ENCODE measurements at regions of chr2 and their contacts with region 1.

Region 1: GRCh38 chr2:71130113-71130904 is at the starts of genes MCEE and MPHOSPH10:
- DNase-seq: peak; percentile 81 to 92 (median 90)
- ATAC-seq: peak; percentile 90
- H3K4me3 ChIP-seq: peak within 1 kb of the TSS; percentile 75 to 96
- H3K4me3 Mint-ChIP-seq: no peak within 1 kb of the TSS
- H3K27ac ChIP-seq: peak within 1 kb of the TSS; percentile 87 to 89
- H3K27ac Mint-ChIP-seq: no peak within 1 kb of the TSS
- H3K4me1 ChIP-seq: peaks cover 27% of the 10 kb centered on the region
- H3K4me1 Mint-ChIP-seq: peaks cover 19% of the 10 kb centered on the region
- H3K27me3 ChIP-seq: no peaks in the 10 kb centered on the region
- H3K27me3 Mint-ChIP-seq: no peaks in the 10 kb centered on the region
- CTCF ChIP-seq: no peak
- total RNA-seq, gene MCEE: 7.1 to 7.3 TPM
- total RNA-seq, gene MPHOSPH10: 51.4 to 57.9 TPM

Region 2: DNA sequence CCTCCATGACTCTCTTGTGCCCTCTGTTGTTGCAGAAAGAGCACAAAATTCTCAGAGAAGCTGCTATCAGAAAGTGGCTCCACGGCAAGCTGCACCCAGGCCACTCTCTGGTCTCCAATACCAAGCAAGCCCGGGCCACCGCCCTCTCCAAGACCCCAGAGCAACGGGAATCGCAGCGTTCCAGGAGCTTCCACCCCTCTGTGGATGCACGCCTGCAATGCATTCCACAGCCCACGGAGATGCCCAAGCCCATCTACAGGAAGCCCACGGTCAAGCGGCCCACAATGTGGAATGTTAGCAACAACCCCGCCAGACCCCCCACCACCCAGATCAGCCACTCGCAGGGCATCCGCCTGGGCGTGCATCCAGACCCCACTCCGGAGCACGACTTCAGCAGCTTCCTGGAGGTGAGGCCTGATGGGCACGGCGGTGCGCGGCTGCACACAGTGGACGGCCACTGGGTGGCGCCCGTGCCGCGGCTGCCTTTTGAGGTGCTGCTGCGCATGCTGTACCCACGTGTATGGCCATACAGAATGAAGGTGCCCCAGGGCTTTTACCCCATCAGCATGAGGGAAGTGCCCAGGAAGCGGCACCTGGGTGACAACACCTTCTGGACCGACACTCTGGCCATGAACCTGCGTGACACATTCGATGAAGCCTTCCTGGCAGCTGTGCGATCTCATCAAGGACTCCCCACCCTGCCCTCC is 145.6 kb before region 1 on chr2:
- CTCF ChIA-PET with region 1: no interaction called
- POLR2A ChIA-PET with region 1: no interaction called
- intact Hi-C with region 1: loop called (anchors 5 kb)
- DNase-seq: peak; percentile 67 to 88 (median 83)
- ATAC-seq: peak; percentile 100
- H3K4me3 ChIP-seq: no peak overlapping the region
- H3K4me3 Mint-ChIP-seq: peak overlapping the region; percentile 51
- H3K27ac ChIP-seq: no peak overlapping the region
- H3K27ac Mint-ChIP-seq: peak overlapping the region; percentile 6
- H3K4me1 ChIP-seq: peaks cover 11% of the 10 kb centered on the region
- H3K4me1 Mint-ChIP-seq: peaks cover 16% of the 10 kb centered on the region
- H3K27me3 ChIP-seq: no peaks in the 10 kb centered on the region
- H3K27me3 Mint-ChIP-seq: no peaks in the 10 kb centered on the region
- CTCF ChIP-seq: peak; percentile 84

Region 3: DNA sequence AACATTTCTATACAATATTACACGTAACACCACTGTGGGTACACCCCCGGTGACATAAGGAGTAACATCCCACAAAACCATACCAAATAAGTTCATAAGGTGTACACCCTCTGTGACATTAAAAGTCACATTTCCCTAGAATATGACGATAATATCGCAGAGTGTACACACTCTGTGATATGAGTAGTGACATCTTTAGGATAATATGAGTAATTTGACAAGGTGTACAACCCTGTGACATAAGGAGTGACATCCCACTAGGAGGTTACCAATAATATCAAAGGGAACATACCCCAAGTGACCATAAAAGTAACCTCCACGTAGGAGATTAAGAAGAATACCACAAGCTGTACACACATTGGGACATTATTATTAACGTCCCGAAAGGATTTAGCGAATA is 111.7 kb before region 1 on chr2:
- CTCF ChIA-PET with region 1: no interaction called
- POLR2A ChIA-PET with region 1: no interaction called
- intact Hi-C with region 1: loop called in 1 of 2 experiments (anchors 1 kb)
- DNase-seq: no peak
- ATAC-seq: no peak
- H3K4me3 ChIP-seq: no peak overlapping the region
- H3K4me3 Mint-ChIP-seq: no peak overlapping the region
- H3K27ac ChIP-seq: no peak overlapping the region
- H3K27ac Mint-ChIP-seq: no peak overlapping the region
- H3K4me1 ChIP-seq: no peaks in the 10 kb centered on the region
- H3K4me1 Mint-ChIP-seq: peaks cover 3% of the 10 kb centered on the region
- H3K27me3 ChIP-seq: no peaks in the 10 kb centered on the region
- H3K27me3 Mint-ChIP-seq: no peaks in the 10 kb centered on the region
- CTCF ChIP-seq: no peak

Region 4: GRCh38 chr2:71226965-71227560 is 96.8 kb after region 1 on chr2 and contains the start of gene PAIP2B:
- CTCF ChIA-PET with region 1: interaction called, 3 read pairs
- POLR2A ChIA-PET with region 1: interaction called, 10 read pairs
- intact Hi-C with region 1: loop called (anchors 1 kb)
- DNase-seq: peak; percentile 95 to 99 (median 96)
- ATAC-seq: peak; percentile 89
- H3K4me3 ChIP-seq: peak within 1 kb of the TSS; percentile 77 to 81
- H3K4me3 Mint-ChIP-seq: peak within 1 kb of the TSS; percentile 97
- H3K27ac ChIP-seq: peak within 1 kb of the TSS; percentile 79 to 81
- H3K27ac Mint-ChIP-seq: peak within 1 kb of the TSS; percentile 98
- H3K4me1 ChIP-seq: peaks cover 15% of the 10 kb centered on the region
- H3K4me1 Mint-ChIP-seq: peaks cover 31% of the 10 kb centered on the region
- H3K27me3 ChIP-seq: peaks cover 0 to 2% of the 10 kb centered on the region in 2 experiments
- H3K27me3 Mint-ChIP-seq: peaks cover 12% of the 10 kb centered on the region
- CTCF ChIP-seq: no peak
- total RNA-seq, gene PAIP2B: 1.7 to 1.8 TPM

Region 5: GRCh38 chr2:71331581-71332434 is 201.5 kb after region 1 on chr2 and contains the start of gene ZNF638:
- CTCF ChIA-PET with region 1: interaction called, 5 read pairs
- POLR2A ChIA-PET with region 1: interaction called, 5 read pairs
- intact Hi-C with region 1: loop called (anchors 5 kb)
- DNase-seq: peak; percentile 83 to 98 (median 92)
- ATAC-seq: peak; percentile 97
- H3K4me3 ChIP-seq: peak within 1 kb of the TSS; percentile 74 to 98
- H3K4me3 Mint-ChIP-seq: peak within 1 kb of the TSS; percentile 99
- H3K27ac ChIP-seq: peak within 1 kb of the TSS; percentile 95 to 98
- H3K27ac Mint-ChIP-seq: peak within 1 kb of the TSS; percentile 100
- H3K4me1 ChIP-seq: peaks cover 40% of the 10 kb centered on the region
- H3K4me1 Mint-ChIP-seq: peaks cover 42% of the 10 kb centered on the region
- H3K27me3 ChIP-seq: no peaks in the 10 kb centered on the region
- H3K27me3 Mint-ChIP-seq: peaks cover 5% of the 10 kb centered on the region
- CTCF ChIP-seq: peak; percentile 66
- total RNA-seq, gene ZNF638: 61.9 to 71.1 TPM